ENCODE measurements at regions of chr19 and their contacts with region 1.

Region 1: GRCh38 chr19:51393959-51394836 is 3.8 kb upstream of the C19orf84 start:
- DNase-seq: peak; percentile 86 to 96
- ATAC-seq: peak; percentile 96 to 98 (median 98)
- H3K4me3 ChIP-seq: peak overlapping the region in 9 of 10 donors; percentile 15 to 56 (median 46)
- H3K27ac ChIP-seq: peak overlapping the region in 9 of 10 donors; percentile 50 to 90 (median 76)
- H3K4me1 ChIP-seq: peaks cover 3 to 28% (median 7%) of the 10 kb centered on the region in 9 donors
- H3K27me3 ChIP-seq: peaks cover 0 to 9% (median 0%) of the 10 kb centered on the region in 7 donors
- CTCF ChIP-seq: peak in 2 of 9 donors; percentile 19 to 26

Region 2: DNA sequence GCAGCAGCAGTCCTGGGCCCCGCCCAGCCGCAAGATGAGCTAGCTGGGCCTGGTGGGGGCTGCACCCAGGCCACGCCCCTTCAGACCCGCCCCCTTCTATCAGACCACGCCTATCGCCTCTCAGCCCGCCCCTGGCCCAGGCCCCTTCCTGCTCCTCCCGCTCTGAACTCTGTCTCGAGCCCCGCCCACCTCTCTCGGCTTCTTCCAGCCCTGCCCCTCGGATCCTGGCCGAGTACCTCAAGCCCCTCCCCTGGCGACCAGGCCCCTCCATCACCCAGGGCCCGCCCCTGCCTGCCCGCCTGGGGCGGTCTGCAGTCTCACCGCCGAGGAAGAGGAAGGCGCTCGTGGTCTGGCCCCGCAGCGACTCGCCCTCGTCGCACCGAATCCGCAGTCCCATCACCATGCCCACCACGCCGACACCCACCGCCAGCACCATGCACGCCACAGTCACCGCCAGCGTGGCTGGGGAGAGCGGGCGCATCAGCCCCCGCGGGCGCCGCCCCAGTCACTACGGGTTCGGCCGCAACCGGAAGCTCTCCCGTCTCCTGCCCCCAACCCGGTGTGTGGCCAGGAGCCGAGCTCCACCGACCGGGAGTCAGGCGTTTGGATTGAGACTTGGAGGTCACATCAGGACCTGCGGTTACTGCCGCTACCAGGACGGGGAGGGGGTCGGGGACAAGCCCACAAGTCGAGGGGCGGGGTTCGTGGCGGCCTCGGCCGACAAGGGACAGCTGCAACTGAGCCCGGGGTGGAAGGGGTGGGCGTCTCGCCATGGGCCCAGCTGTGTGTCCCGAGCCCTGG is 26.4 kb before region 1 on chr19:
- intact Hi-C with region 1: loop called in 3 of 10 experiments (anchors 1 to 2 kb)
- DNase-seq: peak; percentile 99
- ATAC-seq: peak; percentile 90 to 96 (median 93)
- H3K4me3 ChIP-seq: peak overlapping the region; percentile 60 to 93 (median 80)
- H3K27ac ChIP-seq: peak overlapping the region; percentile 89 to 98 (median 96)
- H3K4me1 ChIP-seq: peaks cover 0 to 50% (median 24%) of the 10 kb centered on the region in 9 donors
- H3K27me3 ChIP-seq: no peaks in the 10 kb centered on the region
- CTCF ChIP-seq: peak in 1 of 9 donors; percentile 6

Region 3: DNA sequence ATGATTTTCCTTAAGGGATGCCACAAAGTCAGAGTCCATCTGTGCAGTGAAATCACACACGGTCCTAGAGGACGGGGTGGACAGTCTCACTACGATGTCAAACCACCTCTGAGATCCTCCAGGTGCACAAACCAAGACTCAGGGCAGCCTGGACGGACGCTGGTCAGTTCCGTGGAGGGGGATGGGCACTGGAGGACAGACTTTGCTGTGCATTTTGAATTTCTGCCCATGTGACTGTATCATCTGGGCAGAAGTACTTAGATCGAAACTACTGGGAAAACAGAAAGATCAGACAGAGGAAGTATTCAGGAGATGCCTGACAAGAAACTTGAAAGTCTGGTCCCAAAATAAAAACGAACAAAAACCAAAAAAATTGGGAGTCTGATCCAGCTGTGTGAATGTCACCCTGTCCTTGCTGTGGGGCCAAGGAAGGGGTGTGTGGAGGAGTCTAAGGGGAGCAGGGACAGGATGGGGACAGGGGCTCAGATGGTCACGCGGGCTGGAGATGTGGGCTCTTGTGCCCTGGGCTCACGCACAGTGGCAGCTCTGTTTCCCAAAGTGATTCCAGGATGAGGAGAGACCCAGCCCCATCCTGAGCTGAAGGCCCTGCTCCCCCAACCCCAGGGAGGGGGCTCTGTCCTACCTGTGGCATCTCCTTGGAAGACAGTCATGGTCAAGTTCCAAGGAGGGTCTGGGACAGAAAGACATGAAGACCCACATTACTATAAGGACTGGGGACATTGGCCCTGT is 62.5 kb after region 1 on chr19:
- intact Hi-C with region 1: no loop called
- DNase-seq: no peak
- ATAC-seq: no peak
- H3K4me3 ChIP-seq: peak overlapping the region in 1 of 10 donors; percentile 16
- H3K27ac ChIP-seq: peak overlapping the region in 1 of 10 donors; percentile 53
- H3K4me1 ChIP-seq: peaks cover 0 to 11% (median 0%) of the 10 kb centered on the region in 9 donors
- H3K27me3 ChIP-seq: peaks cover 0 to 52% (median 31%) of the 10 kb centered on the region in 7 donors
- CTCF ChIP-seq: no peak